ENCODE measurements at regions of chr16 and their contacts with region 1.

Region 1: DNA sequence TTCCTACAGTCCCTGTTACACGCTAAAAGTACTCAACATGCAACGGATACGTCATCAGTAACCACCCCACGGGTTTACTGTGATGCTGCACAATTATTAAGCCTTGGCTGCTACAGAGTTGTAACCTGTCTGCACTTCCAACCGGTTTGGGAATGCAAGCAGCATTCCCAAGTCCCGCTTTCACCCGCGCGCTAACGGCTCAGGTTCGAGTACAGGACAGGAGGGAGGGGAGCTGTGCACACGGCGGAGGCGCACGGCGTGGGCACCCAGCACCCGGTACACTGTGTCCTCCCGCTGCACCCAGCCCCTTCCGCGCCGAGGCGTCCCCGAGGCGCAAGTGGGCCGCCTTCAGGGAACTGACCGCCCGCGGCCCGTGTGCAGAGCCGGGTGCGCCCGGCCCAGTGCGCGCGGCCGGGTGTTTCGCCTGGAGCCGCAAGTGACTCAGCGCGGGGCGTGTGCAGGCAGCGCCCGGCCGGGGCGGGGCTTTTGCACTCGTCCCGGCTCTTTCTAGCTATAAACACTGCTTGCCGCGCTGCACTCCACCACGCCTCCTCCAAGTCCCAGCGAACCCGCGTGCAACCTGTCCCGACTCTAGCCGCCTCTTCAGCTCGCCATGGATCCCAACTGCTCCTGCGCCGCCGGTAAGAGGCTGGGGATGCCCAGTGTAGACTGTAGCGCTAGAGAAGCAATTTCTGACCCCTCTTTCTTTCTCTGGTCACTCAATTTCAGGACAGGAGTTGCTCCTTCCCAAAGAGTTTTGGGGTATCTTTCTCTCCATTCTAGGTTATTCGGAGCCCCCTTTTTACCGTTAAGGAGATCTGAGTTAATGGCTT is at the start of gene MT2A:
- DNase-seq: peak; percentile 97
- ATAC-seq: peak; percentile 66
- H3K4me3 Mint-ChIP-seq: peak within 1 kb of the TSS; percentile 97
- H3K27ac Mint-ChIP-seq: peak within 1 kb of the TSS; percentile 98
- H3K4me1 Mint-ChIP-seq: peaks cover 56% of the 10 kb centered on the region
- H3K27me3 Mint-ChIP-seq: no peaks in the 10 kb centered on the region
- total RNA-seq, gene MT2A: 114 to 380 TPM

Region 2: DNA sequence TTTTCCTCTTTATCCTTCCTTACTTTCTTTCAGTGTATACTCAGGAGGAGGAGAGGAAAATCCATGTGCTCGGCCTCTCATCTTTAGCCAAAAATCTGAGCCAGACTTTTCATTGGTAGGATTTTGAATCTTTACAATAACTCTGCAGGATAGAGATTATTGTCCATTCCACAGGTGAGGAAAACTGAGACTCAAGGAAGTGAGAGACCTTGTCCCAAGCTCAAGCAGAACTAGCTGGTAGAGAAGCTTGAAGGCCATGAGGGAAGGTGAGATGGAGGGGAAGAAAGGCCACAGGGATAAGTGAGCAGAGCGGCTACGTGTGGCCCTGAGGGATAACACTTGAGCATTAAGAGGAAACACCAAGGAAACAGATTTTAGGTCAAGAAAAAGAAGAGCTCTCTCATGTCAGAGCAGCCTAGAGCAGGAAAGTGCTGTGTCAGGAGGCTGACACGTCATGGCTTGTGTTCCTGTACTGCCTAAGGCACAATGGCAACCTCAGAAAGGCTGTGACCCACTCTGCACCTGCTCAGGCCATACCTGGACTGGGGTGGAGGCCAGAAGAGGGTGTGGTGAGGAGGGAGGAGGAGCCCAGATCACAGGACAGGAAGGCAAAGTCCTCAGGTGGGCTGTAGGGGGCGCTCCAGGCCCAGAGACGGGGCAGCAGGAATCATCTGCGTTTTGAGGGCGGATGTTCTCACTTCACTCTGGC is 31.5 kb before region 1 on chr16:
- CTCF ChIA-PET with region 1: interaction called, 10 read pairs
- POLR2A ChIA-PET with region 1: no interaction called
- intact Hi-C with region 1: loop called in 1 of 2 experiments (anchors 1 kb)
- DNase-seq: peak; percentile 95
- ATAC-seq: peak; percentile 100
- H3K4me3 Mint-ChIP-seq: no peak overlapping the region
- H3K27ac Mint-ChIP-seq: peak overlapping the region; percentile 70
- H3K4me1 Mint-ChIP-seq: peaks cover 4% of the 10 kb centered on the region
- H3K27me3 Mint-ChIP-seq: no peaks in the 10 kb centered on the region

Region 3: DNA sequence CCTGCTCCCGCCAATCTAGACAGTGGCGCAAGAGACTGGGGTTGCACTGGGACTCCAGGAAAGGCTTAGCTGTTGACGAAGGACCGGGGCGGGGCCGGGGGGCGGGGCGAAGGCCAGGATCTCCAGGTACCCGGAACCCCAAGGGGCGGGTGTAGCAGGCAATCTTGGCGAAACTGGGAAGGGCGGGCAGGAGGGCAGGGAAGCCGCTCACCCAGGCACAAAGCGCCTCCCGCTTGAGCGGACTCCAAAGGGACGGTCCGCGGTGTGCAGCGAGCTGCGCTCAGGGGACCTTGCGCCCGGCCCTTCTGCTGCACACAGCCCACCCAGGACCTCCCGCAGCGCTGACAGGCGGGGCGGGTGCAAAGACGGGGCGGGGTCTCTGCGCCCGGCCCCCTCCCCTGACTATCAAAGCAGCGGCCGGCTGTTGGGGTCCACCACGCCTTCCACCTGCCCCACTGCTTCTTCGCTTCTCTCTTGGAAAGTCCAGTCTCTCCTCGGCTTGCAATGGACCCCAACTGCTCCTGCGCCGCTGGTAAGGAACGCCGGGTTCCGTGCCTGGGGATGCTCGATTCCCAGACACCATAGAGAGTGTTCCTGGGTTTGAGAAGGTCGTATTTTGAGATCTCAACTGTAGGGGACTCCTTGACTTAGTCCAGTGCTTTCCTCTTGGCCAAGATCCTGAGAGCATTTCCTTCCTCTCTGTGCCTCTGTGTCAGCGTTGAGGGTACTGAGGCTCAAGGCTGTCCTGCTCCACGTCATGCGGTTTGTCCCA is 49.5 kb after region 1 on chr16 and contains the start of gene MT1F:
- CTCF ChIA-PET with region 1: no interaction called
- POLR2A ChIA-PET with region 1: no interaction called
- intact Hi-C with region 1: loop called (anchors 1 kb)
- DNase-seq: peak; percentile 84
- ATAC-seq: peak; percentile 85
- H3K4me3 Mint-ChIP-seq: peak within 1 kb of the TSS; percentile 79
- H3K27ac Mint-ChIP-seq: peak within 1 kb of the TSS; percentile 76
- H3K4me1 Mint-ChIP-seq: peaks cover 16% of the 10 kb centered on the region
- H3K27me3 Mint-ChIP-seq: peaks cover 2% of the 10 kb centered on the region
- total RNA-seq, gene MT1F: 7.0 to 7.1 TPM

Region 4: DNA sequence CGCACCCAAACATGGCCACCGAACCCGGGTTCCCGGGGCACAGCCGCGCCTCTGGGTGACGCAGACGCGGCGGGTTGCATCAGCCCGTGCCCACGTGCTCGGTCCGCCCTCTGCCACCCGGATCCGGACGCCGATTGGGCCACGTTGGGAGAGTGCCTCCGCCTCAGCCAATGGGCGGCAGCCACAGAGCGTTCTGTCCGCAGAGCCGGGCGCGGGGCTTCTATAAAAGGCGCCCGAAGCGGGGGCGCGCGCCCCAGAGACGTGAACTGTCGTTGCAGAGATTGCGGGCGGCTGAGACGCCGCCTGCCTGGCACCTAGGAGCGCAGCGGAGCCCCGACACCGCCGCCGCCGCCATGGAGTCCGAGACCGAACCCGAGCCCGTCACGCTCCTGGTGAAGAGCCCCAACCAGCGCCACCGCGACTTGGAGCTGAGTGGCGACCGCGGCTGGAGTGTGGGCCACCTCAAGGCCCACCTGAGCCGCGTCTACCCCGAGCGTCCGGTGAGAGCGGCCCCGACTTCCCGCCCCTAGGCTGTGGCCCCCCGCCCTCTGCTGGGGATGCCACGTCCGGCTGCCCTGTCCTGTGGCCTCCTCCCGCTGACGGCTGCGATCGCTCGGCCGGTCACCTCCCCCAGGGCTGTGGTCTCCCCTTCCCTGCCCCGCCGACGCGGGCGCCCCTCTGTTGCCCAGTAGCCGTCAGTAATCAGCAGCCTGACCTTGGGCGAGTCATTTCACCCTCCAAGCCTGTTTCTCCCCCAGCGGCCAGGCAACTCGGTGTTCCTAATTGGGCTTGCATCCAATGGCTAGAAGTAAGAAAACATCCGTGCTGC is 323.8 kb after region 1 on chr16 and contains the start of gene HERPUD1:
- CTCF ChIA-PET with region 1: no interaction called
- POLR2A ChIA-PET with region 1: no interaction called
- intact Hi-C with region 1: loop called (anchors 2 to 5 kb)
- DNase-seq: peak; percentile 100
- ATAC-seq: peak; percentile 94
- H3K4me3 Mint-ChIP-seq: peak within 1 kb of the TSS; percentile 98
- H3K27ac Mint-ChIP-seq: peak within 1 kb of the TSS; percentile 95
- H3K4me1 Mint-ChIP-seq: peaks cover 40% of the 10 kb centered on the region
- H3K27me3 Mint-ChIP-seq: no peaks in the 10 kb centered on the region
- total RNA-seq, gene HERPUD1: 136 to 195 TPM

Region 5: DNA sequence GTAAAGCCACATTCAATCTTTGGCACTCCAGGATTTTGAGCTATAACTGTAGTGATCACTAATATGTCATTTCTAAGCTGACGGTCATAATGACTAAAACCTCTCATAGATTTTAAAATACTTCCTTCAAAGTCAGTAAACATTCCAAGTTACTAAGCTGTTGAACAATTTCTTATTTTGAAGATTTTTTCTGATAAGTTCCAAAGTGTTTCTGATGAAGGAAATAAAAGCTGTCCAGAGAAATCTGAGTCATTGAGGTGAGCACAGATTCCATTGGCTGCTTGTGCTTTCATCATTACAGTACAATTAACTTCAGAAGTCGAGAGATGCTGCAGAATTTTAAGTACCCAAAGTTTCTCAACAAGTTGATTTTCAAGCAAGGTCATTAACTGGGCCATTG is 405.0 kb after region 1 on chr16:
- CTCF ChIA-PET with region 1: no interaction called
- POLR2A ChIA-PET with region 1: no interaction called
- intact Hi-C with region 1: loop called in 1 of 2 experiments (anchors 2 kb)
- DNase-seq: no peak
- ATAC-seq: no peak
- H3K4me3 Mint-ChIP-seq: peak overlapping the region; percentile 19
- H3K27ac Mint-ChIP-seq: peak overlapping the region; percentile 95
- H3K4me1 Mint-ChIP-seq: peaks cover 85% of the 10 kb centered on the region
- H3K27me3 Mint-ChIP-seq: no peaks in the 10 kb centered on the region

Region 6: DNA sequence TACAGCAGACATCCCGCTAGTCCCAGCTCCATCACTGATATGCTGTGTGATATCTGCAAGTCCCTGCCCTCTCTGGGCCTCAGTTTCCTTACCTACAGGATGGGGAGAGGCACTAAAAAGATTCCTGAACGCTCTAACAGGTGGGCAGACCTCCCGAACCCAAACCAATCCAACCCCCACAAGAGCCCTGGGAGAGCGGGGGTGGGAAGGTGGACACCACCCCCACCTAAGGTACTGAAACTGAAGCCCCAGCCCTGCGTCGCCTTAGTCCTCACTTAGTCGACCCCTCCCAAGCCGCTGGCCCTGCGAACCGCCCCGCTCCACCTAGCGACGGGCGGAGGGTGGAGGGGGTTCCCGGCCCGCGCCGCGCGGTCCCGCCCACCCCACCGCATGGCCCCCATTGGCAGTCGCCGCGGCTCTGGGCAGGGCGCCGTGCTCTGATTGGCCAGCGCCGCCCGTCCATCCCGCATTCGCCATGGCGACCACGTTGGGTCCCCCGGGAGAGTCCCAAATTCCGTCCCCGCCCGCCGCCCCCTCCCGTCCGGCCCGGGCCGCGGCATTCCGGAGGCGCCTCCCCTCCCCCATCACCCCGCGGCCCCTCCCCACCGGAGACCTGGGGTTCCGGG is 927.5 kb after region 1 on chr16:
- CTCF ChIA-PET with region 1: no interaction called
- POLR2A ChIA-PET with region 1: no interaction called
- intact Hi-C with region 1: loop called in 1 of 2 experiments (anchors 10 kb)
- DNase-seq: peak; percentile 97
- ATAC-seq: peak; percentile 80
- H3K4me3 Mint-ChIP-seq: peak overlapping the region; percentile 78
- H3K27ac Mint-ChIP-seq: peak overlapping the region; percentile 94
- H3K4me1 Mint-ChIP-seq: peaks cover 70% of the 10 kb centered on the region
- H3K27me3 Mint-ChIP-seq: no peaks in the 10 kb centered on the region